IMR-90 (cell line): ENCODE measurements at regions of chr4 and their contacts with region 1.

Region 1: GRCh38 chr4:6692340-6693161 is 1.1 kb upstream of the S100P start:
- DNase-seq: peak; percentile 42
- ATAC-seq: peak; percentile 36
- H3K4me3 ChIP-seq: no peak overlapping the region
- H3K27ac ChIP-seq: peak overlapping the region; percentile 18; the same call in 1 of the 2 replicates
- H3K4me1 ChIP-seq: peaks cover 34% of the 10 kb centered on the region
- H3K27me3 ChIP-seq: no peaks in the 10 kb centered on the region
- CTCF ChIP-seq: no peak
- POLR2A ChIP-seq: no peak
- RAD21 ChIP-seq: no peak

Region 2: GRCh38 chr4:6709230-6710114 is 16.9 kb after region 1 on chr4 and contains the start of gene MRFAP1L1:
- CTCF ChIA-PET with region 1: interaction called, 3 read pairs
- POLR2A ChIA-PET with region 1: no interaction called
- dilution Hi-C with region 1: no loop called
- in situ Hi-C with region 1: no loop called
- intact Hi-C with region 1: loop called (anchors 2 kb)
- DNase-seq: peak; percentile 97
- ATAC-seq: peak; percentile 93
- H3K4me3 ChIP-seq: peak within 1 kb of the TSS; percentile 85
- H3K27ac ChIP-seq: peak within 1 kb of the TSS; percentile 78
- H3K4me1 ChIP-seq: peaks cover 2% of the 10 kb centered on the region
- H3K27me3 ChIP-seq: no peaks in the 10 kb centered on the region
- CTCF ChIP-seq: no peak; the same call in 1 of the 2 replicates
- POLR2A ChIP-seq: peak; percentile 59; the same call in 1 of the 2 replicates
- RAD21 ChIP-seq: no peak
- total RNA-seq, gene MRFAP1L1: 31.7 and 64.2 TPM in 2 replicates